ENCODE measurements at regions of chr19 and their contacts with region 1.

Region 1: GRCh38 chr19:48965040-48965805 is at the start of gene FTL:
- DNase-seq: peak; percentile 82
- ATAC-seq: peak; percentile 79
- H3K4me3 ChIP-seq: peak within 1 kb of the TSS; percentile 93
- H3K27ac ChIP-seq: peak within 1 kb of the TSS; percentile 84
- H3K4me1 ChIP-seq: peaks cover 41% of the 10 kb centered on the region
- H3K27me3 ChIP-seq: no peaks in the 10 kb centered on the region
- CTCF ChIP-seq: no peak
- EP300 ChIP-seq: no peak
- POLR2A ChIP-seq: peak; percentile 95
- RAD21 ChIP-seq: no peak
- polyA plus RNA-seq, gene FTL: 5,502 to 8,913 TPM

Region 2: DNA sequence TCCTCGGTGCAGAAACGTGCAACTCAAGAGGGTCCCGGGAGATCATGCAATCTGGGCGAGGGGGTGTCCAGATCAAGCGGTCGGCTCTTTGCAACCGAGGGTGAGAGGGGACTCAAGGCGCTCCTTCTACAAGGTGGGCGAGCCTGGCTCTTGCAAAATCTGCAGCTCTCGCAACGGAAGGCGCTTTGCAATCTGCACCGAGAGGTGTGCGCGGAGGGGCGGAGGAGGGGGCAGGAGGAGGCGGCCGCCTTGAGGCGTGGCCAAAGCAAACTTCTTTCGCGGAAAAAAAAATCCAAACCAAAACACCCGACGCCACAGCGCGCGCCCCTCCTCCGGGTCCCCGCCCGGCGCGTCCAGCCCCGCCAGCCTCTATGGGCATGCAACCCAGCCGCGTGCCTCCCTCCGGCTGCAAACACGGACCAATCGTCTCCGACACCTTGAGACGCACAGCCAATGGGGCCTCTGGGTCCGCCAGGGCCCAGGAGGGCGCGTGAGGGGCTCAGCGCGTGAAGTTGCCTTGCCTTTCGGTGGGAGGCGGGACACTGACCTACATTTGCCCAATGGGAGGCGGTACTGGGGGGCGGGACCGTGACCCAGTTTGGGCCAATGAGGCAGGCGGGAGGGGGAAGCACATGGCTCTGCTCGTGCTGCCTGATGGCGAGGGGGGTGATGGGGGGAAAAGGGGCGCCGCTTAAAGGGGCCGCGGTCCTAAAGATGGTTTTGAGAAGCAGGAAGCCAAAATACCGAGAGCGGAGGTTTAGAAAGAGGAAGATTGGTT is 327.9 kb before region 1 on chr19 and contains the start of gene DBP:
- CTCF ChIA-PET with region 1: no interaction called
- POLR2A ChIA-PET with region 1: interaction called, 7 read pairs
- RAD21 ChIA-PET with region 1: no interaction called
- SMC1A ChIA-PET with region 1: no interaction called
- in situ Hi-C with region 1: no loop called
- intact Hi-C with region 1: loop called (anchors 10 kb)
- DNase-seq: peak; percentile 96
- ATAC-seq: peak; percentile 85
- H3K4me3 ChIP-seq: peak within 1 kb of the TSS; percentile 89
- H3K27ac ChIP-seq: peak within 1 kb of the TSS; percentile 93
- H3K4me1 ChIP-seq: peaks cover 28% of the 10 kb centered on the region
- H3K27me3 ChIP-seq: no peaks in the 10 kb centered on the region
- CTCF ChIP-seq: no peak; a peak in 1 of 6 replicates
- EP300 ChIP-seq: no peak; a peak in 2 of 4 replicates
- POLR2A ChIP-seq: peak; percentile 65; the same call in 1 of the 2 replicates
- RAD21 ChIP-seq: no peak
- polyA plus RNA-seq, gene DBP: 2.0 to 2.6 TPM

Region 3: GRCh38 chr19:48724796-48725753 is 240.1 kb before region 1 on chr19:
- CTCF ChIA-PET with region 1: no interaction called
- POLR2A ChIA-PET with region 1: no interaction called
- RAD21 ChIA-PET with region 1: no interaction called
- SMC1A ChIA-PET with region 1: no interaction called
- in situ Hi-C with region 1: no loop called
- intact Hi-C with region 1: no loop called
- DNase-seq: no peak
- ATAC-seq: peak; percentile 20; the same call in 2 of the 3 replicates
- H3K4me3 ChIP-seq: no peak overlapping the region
- H3K27ac ChIP-seq: no peak overlapping the region
- H3K4me1 ChIP-seq: peaks cover 4% of the 10 kb centered on the region
- H3K27me3 ChIP-seq: no peaks in the 10 kb centered on the region
- CTCF ChIP-seq: no peak
- EP300 ChIP-seq: no peak
- POLR2A ChIP-seq: no peak
- RAD21 ChIP-seq: no peak

Region 4: DNA sequence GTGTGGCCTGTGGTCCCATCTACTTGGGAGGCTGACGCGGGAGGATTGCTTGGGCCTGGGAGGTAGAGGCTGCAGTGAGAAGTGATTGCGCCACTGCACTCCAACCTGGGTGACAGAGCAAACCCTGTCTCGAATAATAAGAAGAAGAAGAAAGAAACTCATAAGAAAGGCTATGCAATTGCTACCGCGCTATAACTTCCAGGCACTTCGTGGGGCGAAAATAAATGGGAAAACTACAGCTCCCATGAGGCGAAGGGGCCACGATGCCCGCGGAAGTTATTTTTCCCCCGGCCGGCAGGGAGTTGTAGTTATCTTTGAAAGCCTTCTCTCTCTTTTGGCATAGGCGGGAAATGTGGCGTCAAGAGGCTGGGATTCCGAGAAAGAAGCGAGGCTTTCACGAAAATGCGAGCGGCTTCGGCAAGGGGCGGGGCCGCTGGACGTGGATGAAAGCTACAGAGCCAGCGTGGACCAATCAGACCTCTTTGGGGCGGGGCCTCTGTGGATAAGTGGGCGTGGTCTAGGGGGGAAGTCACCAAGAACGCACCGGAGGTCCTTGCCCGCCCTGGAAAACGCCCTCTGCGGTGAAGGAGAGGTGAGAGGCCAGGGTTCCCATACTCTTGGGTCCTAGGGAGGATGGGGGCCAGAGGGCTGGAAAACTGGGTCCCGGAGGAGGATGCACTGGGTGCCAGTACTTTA is 65.3 kb before region 1 on chr19 and contains the start of gene NUCB1:
- CTCF ChIA-PET with region 1: interaction called, 5 read pairs
- POLR2A ChIA-PET with region 1: interaction called, 21 read pairs
- RAD21 ChIA-PET with region 1: interaction called, 9 read pairs
- SMC1A ChIA-PET with region 1: interaction called, 4 read pairs
- in situ Hi-C with region 1: no loop called
- intact Hi-C with region 1: no loop called
- DNase-seq: peak; percentile 89
- ATAC-seq: peak; percentile 95
- H3K4me3 ChIP-seq: peak within 1 kb of the TSS; percentile 99
- H3K27ac ChIP-seq: peak within 1 kb of the TSS; percentile 47
- H3K4me1 ChIP-seq: no peaks in the 10 kb centered on the region; the same call in 1 of the 2 replicates
- H3K27me3 ChIP-seq: no peaks in the 10 kb centered on the region
- CTCF ChIP-seq: 0 out of 6 replicates have a peak, but pooled peaks of 1 of the 3 experiments have one; percentile 13
- EP300 ChIP-seq: no peak
- POLR2A ChIP-seq: peak; percentile 69
- RAD21 ChIP-seq: no peak
- polyA plus RNA-seq, gene NUCB1: 1.8 to 3.2 TPM

Region 5: DNA sequence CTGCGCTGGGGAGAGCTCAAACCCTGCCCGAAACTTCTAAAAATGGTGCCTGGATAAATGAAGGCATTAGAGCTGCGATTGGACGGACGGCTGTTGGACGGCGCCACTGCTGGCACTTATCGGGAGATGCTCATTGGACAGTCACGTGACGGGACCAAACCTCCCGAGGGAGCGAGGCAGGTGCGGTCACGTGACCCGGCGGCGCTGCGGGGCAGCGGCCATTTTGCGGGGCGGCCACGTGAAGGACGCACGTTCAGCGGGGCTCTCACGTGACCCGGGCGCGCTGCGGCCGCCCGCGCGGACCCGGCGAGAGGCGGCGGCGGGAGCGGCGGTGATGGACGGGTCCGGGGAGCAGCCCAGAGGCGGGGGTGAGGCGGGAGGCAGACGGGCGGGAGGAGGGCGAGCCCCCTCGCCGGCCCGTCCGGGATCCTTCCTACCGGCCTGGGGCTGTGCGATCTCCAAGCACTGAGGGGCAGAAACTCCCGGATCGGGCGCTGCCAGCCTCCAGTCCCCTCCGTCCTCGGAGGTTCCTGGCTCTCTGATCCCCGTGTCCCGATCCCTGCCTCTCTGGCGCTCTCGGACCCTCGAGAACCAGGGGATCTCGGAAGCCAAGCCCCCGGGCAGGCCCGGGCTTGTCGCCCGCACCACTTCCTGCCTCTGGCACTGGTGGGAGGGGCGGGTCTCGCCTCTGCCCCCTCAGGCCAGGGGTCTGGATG is 10.5 kb before region 1 on chr19 and contains the start of gene BAX:
- CTCF ChIA-PET with region 1: interaction called, 8 read pairs
- POLR2A ChIA-PET with region 1: interaction called, 15 read pairs
- RAD21 ChIA-PET with region 1: interaction called, 8 read pairs
- SMC1A ChIA-PET with region 1: interaction called, 14 read pairs
- in situ Hi-C with region 1: no loop called
- intact Hi-C with region 1: no loop called
- DNase-seq: peak; percentile 92
- ATAC-seq: peak; percentile 98
- H3K4me3 ChIP-seq: peak within 1 kb of the TSS; percentile 98
- H3K27ac ChIP-seq: peak within 1 kb of the TSS; percentile 99
- H3K4me1 ChIP-seq: peaks cover 5% of the 10 kb centered on the region; the same call in 1 of the 2 replicates
- H3K27me3 ChIP-seq: no peaks in the 10 kb centered on the region
- CTCF ChIP-seq: peak in 1 of 3 experiments; percentile 18; a peak in 1 of 6 replicates
- EP300 ChIP-seq: no peak
- POLR2A ChIP-seq: peak; percentile 86
- RAD21 ChIP-seq: 0 out of 2 replicates have a peak, but pooled peaks have one; percentile 20
- polyA plus RNA-seq, gene BAX: 7.2 to 15.3 TPM

Region 6: GRCh38 chr19:48993175-48994034 is 28.2 kb after region 1 on chr19 and contains the starts of genes GYS1 and RUVBL2:
- CTCF ChIA-PET with region 1: interaction called, 36 read pairs
- POLR2A ChIA-PET with region 1: interaction called, 26 read pairs
- RAD21 ChIA-PET with region 1: interaction called, 12 read pairs
- SMC1A ChIA-PET with region 1: interaction called, 11 read pairs
- in situ Hi-C with region 1: no loop called
- intact Hi-C with region 1: no loop called
- DNase-seq: peak; percentile 98
- ATAC-seq: peak; percentile 96
- H3K4me3 ChIP-seq: peak within 1 kb of the TSS; percentile 93
- H3K27ac ChIP-seq: peak within 1 kb of the TSS; percentile 86
- H3K4me1 ChIP-seq: peaks cover 3% of the 10 kb centered on the region
- H3K27me3 ChIP-seq: no peaks in the 10 kb centered on the region
- CTCF ChIP-seq: peak; percentile 98; a peak in 5 of 6 replicates
- EP300 ChIP-seq: no peak
- POLR2A ChIP-seq: peak; percentile 90
- RAD21 ChIP-seq: 0 out of 2 replicates have a peak, but pooled peaks have one; percentile 32
- polyA plus RNA-seq, gene GYS1: 3.7 to 5.8 TPM
- polyA plus RNA-seq, gene RUVBL2: 33.8 to 70.6 TPM

Measured in GM12878 (cell line).